ENCODE measurements at regions of chr17 and their contacts with region 1.

Region 1: GRCh38 chr17:879549-880442 is 97.6 kb downstream of the MRM3 start:
- DNase-seq: peak; percentile 30
- ATAC-seq: no peak
- H3K4me3 ChIP-seq: no peak overlapping the region
- H3K27ac ChIP-seq: peak overlapping the region; percentile 63
- H3K4me1 ChIP-seq: peaks cover 46% of the 10 kb centered on the region
- H3K27me3 ChIP-seq: no peaks in the 10 kb centered on the region
- CTCF ChIP-seq: no peak

Region 2: DNA sequence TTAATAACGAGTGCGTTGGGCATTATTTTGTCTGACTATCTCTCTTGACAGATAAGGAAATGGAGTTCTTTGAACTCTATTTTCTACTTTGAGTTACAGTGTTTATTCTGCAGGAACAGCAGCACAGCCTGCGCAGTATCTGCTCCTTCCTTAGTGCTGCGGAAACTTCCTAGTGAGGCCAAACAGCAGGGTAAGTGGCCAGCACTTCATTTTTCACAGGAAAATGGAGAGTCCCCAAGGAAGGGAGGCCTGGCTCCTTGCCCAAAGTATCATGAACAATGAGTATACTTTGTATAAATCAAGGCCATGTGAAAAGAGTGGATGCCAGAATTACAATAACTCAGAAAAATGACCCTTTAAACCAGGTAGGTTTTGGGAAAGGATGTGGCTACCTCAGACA is 305.7 kb before region 1 on chr17:
- CTCF ChIA-PET with region 1: no interaction called
- POLR2A ChIA-PET with region 1: no interaction called
- in situ Hi-C with region 1: no loop called
- intact Hi-C with region 1: loop called (anchors 10 kb)
- DNase-seq: no peak
- ATAC-seq: no peak
- H3K4me3 ChIP-seq: no peak overlapping the region
- H3K27ac ChIP-seq: no peak overlapping the region
- H3K4me1 ChIP-seq: no peaks in the 10 kb centered on the region
- H3K27me3 ChIP-seq: no peaks in the 10 kb centered on the region
- CTCF ChIP-seq: no peak

Region 3: DNA sequence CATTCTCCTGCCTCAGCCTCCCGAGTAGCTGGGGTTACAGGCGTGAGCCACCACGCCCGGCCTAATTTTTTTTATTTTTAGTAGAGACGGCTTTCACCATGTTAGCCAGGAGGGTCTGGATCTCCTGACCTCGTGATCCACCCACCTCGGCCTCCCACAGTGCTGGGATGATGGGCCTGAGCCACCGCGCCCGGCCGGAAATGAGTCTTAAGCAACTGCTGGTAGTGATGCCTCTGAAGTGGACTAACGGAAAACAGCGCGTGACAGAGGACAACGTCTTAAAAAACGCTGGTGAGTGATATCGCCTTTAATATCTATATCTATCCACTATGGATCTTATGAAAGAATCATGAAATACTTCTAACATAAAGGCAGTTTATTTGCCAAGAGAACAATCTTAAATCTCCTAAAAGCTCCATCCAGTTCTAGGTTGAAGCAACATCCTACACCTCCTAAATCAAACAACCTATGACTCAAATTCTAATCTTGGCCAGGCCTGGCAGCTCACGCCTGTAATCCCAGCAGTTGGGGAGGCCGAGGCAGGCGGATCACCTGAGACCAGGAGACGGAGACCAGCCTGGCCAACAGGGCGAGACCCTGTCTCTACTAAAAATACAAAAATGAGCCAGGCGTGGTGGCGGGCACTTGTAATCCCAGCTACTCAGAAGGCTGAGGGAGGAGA is 30.0 kb after region 1 on chr17:
- CTCF ChIA-PET with region 1: no interaction called
- POLR2A ChIA-PET with region 1: interaction called, 24 read pairs
- in situ Hi-C with region 1: no loop called
- intact Hi-C with region 1: no loop called
- DNase-seq: no peak
- ATAC-seq: no peak
- H3K4me3 ChIP-seq: no peak overlapping the region
- H3K27ac ChIP-seq: peak overlapping the region; percentile 87
- H3K4me1 ChIP-seq: peaks cover 38% of the 10 kb centered on the region
- H3K27me3 ChIP-seq: no peaks in the 10 kb centered on the region
- CTCF ChIP-seq: no peak

Measured in Panc1 (cell line).